MCF 10A (cell line): ENCODE measurements at regions of chrX and their contacts with region 1.

Region 1: DNA sequence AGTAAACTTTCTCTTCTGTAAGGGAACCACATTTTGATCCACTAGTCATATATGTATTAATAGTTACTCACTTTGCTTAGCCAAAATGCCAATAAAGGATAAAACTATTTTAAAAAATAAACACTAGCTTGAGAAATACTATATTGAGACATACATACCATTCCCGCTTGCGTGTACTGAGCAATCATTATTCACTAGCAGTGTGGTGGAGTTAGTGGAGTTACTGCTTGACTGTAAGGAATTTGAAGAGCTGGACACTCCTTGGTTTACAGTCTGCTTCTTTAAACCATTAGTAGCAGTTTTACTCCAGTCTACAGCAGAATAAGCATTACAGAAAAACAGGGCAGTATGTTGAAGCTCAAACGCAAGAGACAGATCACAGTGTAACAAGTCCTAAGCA is 10.8 kb upstream of the PHKA2 start:
- DNase-seq: peak; percentile 51
- H3K4me3 Mint-ChIP-seq: peak overlapping the region; percentile 2
- H3K27ac Mint-ChIP-seq: peak overlapping the region; percentile 70
- H3K4me1 Mint-ChIP-seq: peaks cover 7% of the 10 kb centered on the region
- H3K27me3 Mint-ChIP-seq: no peaks in the 10 kb centered on the region
- CTCF ChIP-seq: no peak

Region 2: DNA sequence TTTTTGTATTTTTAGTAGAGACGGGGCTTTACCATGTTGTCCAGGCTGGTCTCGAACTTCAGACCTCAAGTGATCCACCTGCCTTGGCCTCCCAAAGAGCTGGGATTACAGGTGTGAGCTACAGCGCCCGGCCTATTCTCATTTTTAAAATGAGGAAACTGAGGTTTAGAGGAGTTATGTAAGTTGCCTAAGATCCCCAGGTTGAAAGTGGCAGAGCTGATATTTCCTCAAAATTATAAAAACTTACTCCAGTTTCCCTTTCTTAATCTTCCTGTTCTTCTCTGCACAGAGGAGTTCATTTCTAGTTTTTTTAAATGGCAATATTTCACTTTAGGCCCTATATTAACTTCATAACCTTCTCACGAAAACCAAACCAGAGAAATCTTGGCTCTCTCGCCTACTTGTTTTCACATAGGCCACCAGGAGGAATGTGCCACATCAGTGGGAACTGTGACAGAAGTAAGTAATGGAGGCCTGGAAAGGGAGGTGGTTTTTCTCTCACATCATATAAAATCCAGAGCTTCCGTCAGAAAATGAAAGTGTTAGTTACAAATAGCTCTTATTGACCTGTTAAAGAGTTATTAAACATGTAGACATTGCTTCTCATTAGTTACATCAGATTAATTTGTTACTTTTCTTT is 306.8 kb before region 1 on chrX:
- CTCF ChIA-PET with region 1: no interaction called
- POLR2A ChIA-PET with region 1: no interaction called
- intact Hi-C with region 1: no loop called
- DNase-seq: no peak
- H3K4me3 Mint-ChIP-seq: no peak overlapping the region
- H3K27ac Mint-ChIP-seq: no peak overlapping the region
- H3K4me1 Mint-ChIP-seq: no peaks in the 10 kb centered on the region
- H3K27me3 Mint-ChIP-seq: no peaks in the 10 kb centered on the region
- CTCF ChIP-seq: no peak

Region 3: GRCh38 chrX:18810416-18810815 is 184.3 kb before region 1 on chrX:
- CTCF ChIA-PET with region 1: no interaction called
- POLR2A ChIA-PET with region 1: no interaction called
- intact Hi-C with region 1: no loop called
- DNase-seq: no peak
- H3K4me3 Mint-ChIP-seq: no peak overlapping the region
- H3K27ac Mint-ChIP-seq: no peak overlapping the region
- H3K4me1 Mint-ChIP-seq: no peaks in the 10 kb centered on the region
- H3K27me3 Mint-ChIP-seq: no peaks in the 10 kb centered on the region
- CTCF ChIP-seq: no peak

Region 4: DNA sequence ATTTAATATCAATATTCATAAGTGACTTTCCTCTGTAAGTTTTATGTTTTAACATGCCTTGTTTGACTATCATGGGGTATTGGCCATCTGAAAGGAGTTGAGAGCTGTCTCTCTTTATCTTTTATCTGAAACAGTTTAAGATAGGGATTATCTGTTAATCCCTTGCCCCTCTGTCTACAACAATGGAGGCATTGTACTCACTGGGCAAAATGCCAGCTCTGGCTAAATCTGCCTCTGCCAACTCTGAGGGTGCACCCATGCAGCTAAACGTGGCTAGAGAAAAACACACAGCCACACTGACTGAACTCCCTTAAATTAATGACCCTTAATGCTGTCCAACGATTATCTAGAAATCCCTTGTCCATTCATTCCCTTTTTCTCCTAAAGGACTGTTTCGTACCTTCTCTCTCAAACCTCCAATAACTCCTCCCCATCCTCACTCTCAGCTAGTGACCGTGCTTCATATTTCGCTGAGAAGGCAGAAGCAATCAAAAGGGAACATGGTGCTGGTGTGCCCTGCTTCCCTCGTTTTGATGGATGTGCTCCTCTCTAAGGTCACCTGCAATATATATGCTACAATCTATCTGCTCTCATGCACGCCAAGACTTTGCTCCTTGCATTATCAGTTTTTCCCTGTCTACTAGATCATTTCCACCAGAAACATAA is 21.1 kb before region 1 on chrX:
- CTCF ChIA-PET with region 1: no interaction called
- POLR2A ChIA-PET with region 1: no interaction called
- intact Hi-C with region 1: no loop called
- DNase-seq: no peak
- H3K4me3 Mint-ChIP-seq: no peak overlapping the region
- H3K27ac Mint-ChIP-seq: no peak overlapping the region
- H3K4me1 Mint-ChIP-seq: peaks cover 6% of the 10 kb centered on the region
- H3K27me3 Mint-ChIP-seq: no peaks in the 10 kb centered on the region
- CTCF ChIP-seq: no peak

Region 5: DNA sequence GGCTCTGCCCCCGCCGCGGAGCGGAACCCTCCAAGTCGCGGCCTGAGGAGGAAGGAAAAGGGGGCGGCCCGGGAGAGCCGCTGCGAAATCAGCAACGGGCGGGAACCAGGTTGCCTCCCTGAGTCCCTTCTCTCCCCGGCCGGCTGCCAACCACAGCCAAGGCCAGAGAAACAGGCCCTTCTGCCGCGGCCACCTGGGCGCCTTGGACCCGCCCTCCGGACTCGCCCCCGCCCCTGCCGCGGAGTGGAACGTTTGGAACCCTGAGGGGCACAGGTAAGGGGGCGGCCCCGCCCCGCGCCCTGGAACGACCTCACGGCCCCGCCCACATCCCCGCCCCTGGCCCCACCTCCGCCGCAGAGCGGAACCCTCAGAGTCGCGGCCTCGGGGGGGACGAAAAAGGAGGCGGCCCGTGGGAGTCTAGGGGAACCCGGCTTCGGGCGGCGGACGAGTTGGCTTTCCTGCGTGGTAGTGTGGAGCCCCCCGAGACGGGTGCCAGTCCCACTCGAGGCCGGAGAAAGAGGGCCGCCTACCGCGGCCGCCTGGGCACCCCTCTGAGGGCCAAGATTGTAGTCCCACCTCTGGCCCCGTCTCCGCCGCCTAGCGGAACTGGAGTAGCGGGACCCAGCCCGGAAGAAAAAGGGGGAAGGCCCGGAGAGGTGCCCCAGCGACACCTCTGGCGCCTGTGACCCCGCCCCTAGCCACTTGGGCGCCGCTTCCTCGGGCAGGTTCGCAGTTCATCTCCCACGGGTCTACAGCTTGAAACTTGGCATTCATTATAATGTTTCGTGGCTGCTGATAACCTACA is 10.2 kb before region 1 on chrX:
- CTCF ChIA-PET with region 1: interaction called, 9 read pairs
- POLR2A ChIA-PET with region 1: interaction called, 39 read pairs
- intact Hi-C with region 1: no loop called
- DNase-seq: peak; percentile 82
- H3K4me3 Mint-ChIP-seq: peak overlapping the region; percentile 79
- H3K27ac Mint-ChIP-seq: peak overlapping the region; percentile 88
- H3K4me1 Mint-ChIP-seq: no peaks in the 10 kb centered on the region
- H3K27me3 Mint-ChIP-seq: no peaks in the 10 kb centered on the region
- CTCF ChIP-seq: peak; percentile 17

Region 6: GRCh38 chrX:19017271-19017670 is 22.5 kb after region 1 on chrX:
- CTCF ChIA-PET with region 1: no interaction called
- POLR2A ChIA-PET with region 1: no interaction called
- intact Hi-C with region 1: no loop called
- DNase-seq: peak; percentile 49
- H3K4me3 Mint-ChIP-seq: no peak overlapping the region
- H3K27ac Mint-ChIP-seq: no peak overlapping the region
- H3K4me1 Mint-ChIP-seq: no peaks in the 10 kb centered on the region
- H3K27me3 Mint-ChIP-seq: no peaks in the 10 kb centered on the region
- CTCF ChIP-seq: peak; percentile 4